Caco-2 (cell line): ENCODE measurements at regions of chr1 and their contacts with region 1.

Region 1: DNA sequence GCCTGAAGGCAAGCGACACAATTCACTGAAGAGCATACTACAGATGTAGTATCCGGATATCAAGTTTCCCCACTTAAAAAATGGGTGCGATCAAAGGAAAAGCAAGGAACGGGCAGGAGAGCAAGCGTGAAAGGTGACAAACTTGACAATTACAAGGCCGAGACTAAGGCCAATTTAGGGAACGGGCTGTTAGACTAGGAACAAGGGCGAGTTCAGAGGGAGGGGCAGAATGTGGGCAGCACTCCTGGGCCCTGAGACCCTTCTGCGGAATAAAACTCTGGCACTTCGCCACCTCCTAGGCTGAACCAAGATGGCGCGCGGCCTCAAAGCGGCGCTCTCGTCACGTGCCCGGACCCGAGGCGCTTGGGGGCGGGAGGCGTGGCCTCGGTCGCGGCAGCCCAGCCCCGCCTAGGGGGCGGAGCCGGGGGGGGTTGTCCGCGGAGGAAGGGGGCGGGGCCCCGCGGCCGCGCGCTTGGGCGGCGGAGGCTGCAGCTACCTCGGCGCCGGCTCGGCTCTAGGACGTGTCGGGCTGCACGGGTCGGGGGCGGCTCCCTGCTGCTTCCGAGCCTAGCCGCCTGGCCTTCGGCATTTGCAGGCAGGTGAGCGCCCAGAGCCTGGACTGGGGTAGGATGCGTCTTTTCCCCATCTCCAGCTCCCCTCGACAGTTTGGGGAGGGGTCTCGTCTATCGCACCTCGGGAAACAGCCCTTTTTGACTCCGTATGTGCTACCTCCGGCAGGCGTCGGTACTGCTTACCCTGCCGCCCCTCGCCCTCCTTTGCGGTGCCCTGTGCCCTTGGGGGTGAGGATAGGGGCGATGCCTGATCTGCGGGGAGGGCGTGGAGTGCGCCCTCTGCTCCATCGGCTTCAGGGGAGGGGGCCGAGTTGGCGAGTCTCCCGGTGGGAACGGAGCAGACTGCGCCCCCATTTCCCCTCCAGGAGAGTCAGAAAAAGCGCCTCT is at the start of gene PPFIA4:
- DNase-seq: peak; percentile 85 to 96
- H3K4me3 ChIP-seq: peak within 1 kb of the TSS; percentile 96
- H3K4me3 Mint-ChIP-seq: peak within 1 kb of the TSS; percentile 70
- H3K27ac Mint-ChIP-seq: peak within 1 kb of the TSS; percentile 68
- H3K4me1 ChIP-seq: peaks cover 6% of the 10 kb centered on the region
- H3K4me1 Mint-ChIP-seq: peaks cover 9% of the 10 kb centered on the region
- H3K27me3 ChIP-seq: no peaks in the 10 kb centered on the region
- H3K27me3 Mint-ChIP-seq: no peaks in the 10 kb centered on the region
- CTCF ChIP-seq: peak in 1 of 2 experiments; percentile 15
- total RNA-seq, gene PPFIA4: 8.7 and 9.4 TPM in 2 replicates

Region 2: DNA sequence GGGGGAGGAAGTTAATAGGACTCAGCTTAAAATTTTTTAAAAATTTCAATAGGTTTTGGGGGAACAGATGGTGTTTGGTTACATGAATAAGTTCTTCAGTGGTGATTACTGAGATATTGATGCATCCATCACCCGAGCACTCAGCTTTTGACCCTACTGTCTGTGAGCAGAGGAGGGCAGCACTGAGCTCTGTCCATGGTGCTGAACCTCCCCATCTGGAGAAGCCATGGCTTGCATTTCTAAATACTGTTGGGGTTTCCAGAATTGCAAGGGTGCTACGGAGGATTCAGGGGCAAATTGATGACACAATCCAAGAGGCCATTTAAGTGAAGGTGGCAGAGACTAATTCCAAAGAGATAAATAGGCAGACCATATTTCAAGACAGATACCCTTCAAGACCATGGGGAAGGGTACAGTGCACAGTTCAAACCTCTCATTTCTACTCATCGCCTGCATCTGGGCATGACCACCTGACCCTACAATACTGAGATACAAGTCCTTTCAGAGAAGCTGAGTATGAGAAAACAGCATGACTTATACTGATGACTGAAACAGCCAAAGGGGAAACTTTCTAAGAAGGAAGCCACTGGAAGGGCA is 333.3 kb before region 1 on chr1:
- CTCF ChIA-PET with region 1: no interaction called
- POLR2A ChIA-PET with region 1: no interaction called
- intact Hi-C with region 1: no loop called
- DNase-seq: peak; percentile 66 to 81
- H3K4me3 ChIP-seq: no peak overlapping the region
- H3K4me3 Mint-ChIP-seq: no peak overlapping the region
- H3K27ac Mint-ChIP-seq: no peak overlapping the region
- H3K4me1 ChIP-seq: no peaks in the 10 kb centered on the region
- H3K4me1 Mint-ChIP-seq: no peaks in the 10 kb centered on the region
- H3K27me3 ChIP-seq: no peaks in the 10 kb centered on the region
- H3K27me3 Mint-ChIP-seq: peaks cover 24% of the 10 kb centered on the region
- CTCF ChIP-seq: peak in 1 of 2 experiments; percentile 45

Region 3: DNA sequence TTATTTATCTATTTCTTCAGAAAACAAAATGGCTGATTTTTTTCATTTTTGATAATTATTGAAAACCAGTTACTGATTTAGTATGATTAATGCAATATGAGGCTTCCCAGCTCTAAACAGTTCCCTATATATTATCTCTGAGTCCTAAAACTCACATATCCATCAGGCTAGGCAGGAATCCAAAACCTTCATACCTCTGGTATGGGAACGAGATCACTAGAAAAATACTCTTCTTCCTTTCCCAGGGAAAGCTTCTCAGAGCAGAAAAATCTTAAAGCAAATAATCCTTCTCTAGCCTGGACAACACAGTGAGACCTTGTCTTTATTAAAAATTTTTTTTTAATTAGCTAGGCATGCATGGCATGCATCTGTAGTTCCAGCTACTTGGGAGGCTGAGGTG is 260.6 kb before region 1 on chr1:
- CTCF ChIA-PET with region 1: no interaction called
- POLR2A ChIA-PET with region 1: no interaction called
- intact Hi-C with region 1: no loop called
- DNase-seq: no peak
- H3K4me3 ChIP-seq: no peak overlapping the region
- H3K4me3 Mint-ChIP-seq: no peak overlapping the region
- H3K27ac Mint-ChIP-seq: no peak overlapping the region
- H3K4me1 ChIP-seq: no peaks in the 10 kb centered on the region
- H3K4me1 Mint-ChIP-seq: no peaks in the 10 kb centered on the region
- H3K27me3 ChIP-seq: no peaks in the 10 kb centered on the region
- H3K27me3 Mint-ChIP-seq: no peaks in the 10 kb centered on the region
- CTCF ChIP-seq: no peak

Region 4: GRCh38 chr1:203267347-203267846 is 241.1 kb after region 1 on chr1:
- CTCF ChIA-PET with region 1: interaction called, 9 read pairs
- POLR2A ChIA-PET with region 1: no interaction called
- intact Hi-C with region 1: loop called (anchors 1 kb)
- DNase-seq: peak; percentile 73 to 78
- H3K4me3 ChIP-seq: no peak overlapping the region
- H3K4me3 Mint-ChIP-seq: no peak overlapping the region
- H3K27ac Mint-ChIP-seq: no peak overlapping the region
- H3K4me1 ChIP-seq: peaks cover 6% of the 10 kb centered on the region; the same call in 1 of the 2 replicates
- H3K4me1 Mint-ChIP-seq: peaks cover 12% of the 10 kb centered on the region
- H3K27me3 ChIP-seq: no peaks in the 10 kb centered on the region
- H3K27me3 Mint-ChIP-seq: no peaks in the 10 kb centered on the region
- CTCF ChIP-seq: peak; percentile 80 to 83